WTC11 (cell line): ENCODE measurements at regions of chr17 and their contacts with region 1.

Region 1: GRCh38 chr17:48228721-48229120 is 121.2 kb downstream of the SNX11 start:
- DNase-seq: peak; percentile 60
- ATAC-seq: peak; percentile 99
- H3K4me3 Mint-ChIP-seq: no peak overlapping the region
- H3K27ac Mint-ChIP-seq: no peak overlapping the region
- H3K4me1 Mint-ChIP-seq: peaks cover 18% of the 10 kb centered on the region
- H3K27me3 Mint-ChIP-seq: no peaks in the 10 kb centered on the region; the same call in 1 of the 2 replicates
- CTCF ChIP-seq: no peak

Region 2: DNA sequence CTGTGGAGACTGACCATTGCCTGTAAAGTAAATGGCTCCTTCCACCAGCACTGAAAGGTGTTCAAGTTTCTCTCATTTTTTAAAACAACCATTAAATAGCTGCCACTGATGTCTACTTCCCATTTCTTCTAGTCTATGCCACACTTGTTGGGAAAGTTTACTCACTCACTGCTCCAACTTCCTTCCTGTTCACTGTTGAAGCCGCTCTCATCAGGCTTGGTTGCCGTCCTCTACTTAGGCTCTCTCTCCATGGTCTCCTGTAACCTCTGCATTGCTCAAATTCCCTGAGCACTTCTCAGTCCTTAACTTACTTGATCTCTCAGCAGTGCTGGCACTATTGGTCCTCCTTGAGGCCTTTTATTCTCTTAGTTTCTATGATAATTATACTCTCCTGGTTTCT is 88.8 kb before region 1 on chr17:
- CTCF ChIA-PET with region 1: interaction called, 13 read pairs
- POLR2A ChIA-PET with region 1: no interaction called
- DNase-seq: no peak
- ATAC-seq: no peak
- H3K4me3 Mint-ChIP-seq: no peak overlapping the region
- H3K27ac Mint-ChIP-seq: no peak overlapping the region
- H3K4me1 Mint-ChIP-seq: peaks cover 7% of the 10 kb centered on the region
- H3K27me3 Mint-ChIP-seq: no peaks in the 10 kb centered on the region
- CTCF ChIP-seq: no peak

Region 3: GRCh38 chr17:48160177-48161081 is 68.3 kb before region 1 on chr17:
- CTCF ChIA-PET with region 1: interaction called, 15 read pairs
- POLR2A ChIA-PET with region 1: no interaction called
- DNase-seq: peak; percentile 60
- ATAC-seq: peak; percentile 93
- H3K4me3 Mint-ChIP-seq: peak overlapping the region; percentile 36
- H3K27ac Mint-ChIP-seq: peak overlapping the region; percentile 7; the same call in 1 of the 2 replicates
- H3K4me1 Mint-ChIP-seq: peaks cover 57% of the 10 kb centered on the region
- H3K27me3 Mint-ChIP-seq: peaks cover 90% of the 10 kb centered on the region
- CTCF ChIP-seq: no peak

Region 4: DNA sequence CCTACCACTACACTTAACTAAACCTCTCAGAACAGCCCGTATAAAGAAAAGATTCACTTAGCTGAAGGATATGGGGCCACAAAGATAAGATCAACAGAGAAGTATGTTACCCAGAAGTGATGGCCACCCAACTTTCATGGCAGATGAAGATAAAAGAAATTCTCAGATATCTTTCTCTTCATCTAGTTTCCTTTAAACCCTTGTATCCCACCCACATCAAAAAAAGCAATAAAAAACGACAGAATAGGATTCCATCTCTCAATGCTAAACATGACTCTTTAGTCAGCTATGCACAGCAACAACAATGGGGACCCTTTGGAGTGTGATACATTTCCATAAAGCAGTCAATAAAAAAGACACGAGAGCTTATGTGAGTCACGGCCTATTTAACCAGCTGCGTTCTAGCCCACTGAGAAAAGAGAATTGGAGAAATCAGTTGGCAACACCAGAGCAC is 34.6 kb before region 1 on chr17:
- CTCF ChIA-PET with region 1: interaction called, 16 read pairs
- POLR2A ChIA-PET with region 1: no interaction called
- DNase-seq: no peak
- ATAC-seq: no peak
- H3K4me3 Mint-ChIP-seq: no peak overlapping the region
- H3K27ac Mint-ChIP-seq: no peak overlapping the region
- H3K4me1 Mint-ChIP-seq: peaks cover 36% of the 10 kb centered on the region
- H3K27me3 Mint-ChIP-seq: peaks cover 71% of the 10 kb centered on the region
- CTCF ChIP-seq: no peak

Region 5: GRCh38 chr17:48215583-48216139 is 13.1 kb before region 1 on chr17:
- CTCF ChIA-PET with region 1: interaction called, 78 read pairs
- POLR2A ChIA-PET with region 1: no interaction called
- DNase-seq: peak; percentile 49
- ATAC-seq: peak; percentile 94
- H3K4me3 Mint-ChIP-seq: no peak overlapping the region
- H3K27ac Mint-ChIP-seq: no peak overlapping the region
- H3K4me1 Mint-ChIP-seq: peaks cover 11% of the 10 kb centered on the region
- H3K27me3 Mint-ChIP-seq: peaks cover 37% of the 10 kb centered on the region
- CTCF ChIP-seq: peak; percentile 42

Region 6: GRCh38 chr17:48241131-48241591 is 12.4 kb after region 1 on chr17:
- CTCF ChIA-PET with region 1: interaction called, 10 read pairs
- POLR2A ChIA-PET with region 1: no interaction called
- DNase-seq: no peak
- ATAC-seq: no peak
- H3K4me3 Mint-ChIP-seq: no peak overlapping the region
- H3K27ac Mint-ChIP-seq: no peak overlapping the region
- H3K4me1 Mint-ChIP-seq: peaks cover 25% of the 10 kb centered on the region
- H3K27me3 Mint-ChIP-seq: peaks cover under 1% of the 10 kb centered on the region
- CTCF ChIP-seq: no peak

Region 7: GRCh38 chr17:48250949-48251348 is 22.2 kb after region 1 on chr17:
- CTCF ChIA-PET with region 1: interaction called, 25 read pairs
- POLR2A ChIA-PET with region 1: no interaction called
- DNase-seq: no peak
- ATAC-seq: no peak
- H3K4me3 Mint-ChIP-seq: no peak overlapping the region
- H3K27ac Mint-ChIP-seq: no peak overlapping the region
- H3K4me1 Mint-ChIP-seq: peaks cover 25% of the 10 kb centered on the region
- H3K27me3 Mint-ChIP-seq: peaks cover 11% of the 10 kb centered on the region
- CTCF ChIP-seq: no peak

Region 8: GRCh38 chr17:48492401-48493298 is 263.9 kb after region 1 on chr17:
- CTCF ChIA-PET with region 1: no interaction called
- POLR2A ChIA-PET with region 1: no interaction called
- DNase-seq: peak; percentile 69
- ATAC-seq: peak; percentile 88
- H3K4me3 Mint-ChIP-seq: peak overlapping the region; percentile 57
- H3K27ac Mint-ChIP-seq: no peak overlapping the region
- H3K4me1 Mint-ChIP-seq: peaks cover 23% of the 10 kb centered on the region
- H3K27me3 Mint-ChIP-seq: peaks cover 85% of the 10 kb centered on the region
- CTCF ChIP-seq: peak; percentile 38